Right ventricle myocardium inferior (tissue), 1 donor: ENCODE measurements at regions of chr5 and their contacts with region 1.

Region 1: GRCh38 chr5:72507909-72508575 is 832 bp upstream of the ZNF366 start:
- DNase-seq: no peak
- ATAC-seq: no peak

Region 2: DNA sequence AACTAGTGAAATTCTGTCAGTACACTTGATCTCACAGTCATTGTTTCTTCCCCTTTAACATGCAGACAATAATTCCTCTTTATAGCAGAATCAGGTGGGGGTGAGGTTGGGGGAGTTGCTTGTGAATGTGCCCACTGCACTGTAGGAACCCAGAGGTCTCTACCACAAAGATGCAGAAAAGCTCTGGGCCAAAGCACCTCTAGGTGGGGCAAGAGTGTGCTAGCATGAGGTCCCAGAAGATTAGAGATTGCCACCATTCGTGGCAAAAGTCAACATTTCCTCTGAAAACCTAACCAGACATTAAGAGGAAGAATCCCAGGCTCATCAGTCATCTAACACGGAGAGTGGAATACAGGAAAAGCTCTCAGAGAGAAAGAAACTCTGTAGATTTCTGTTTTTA is 113.4 kb before region 1 on chr5:
- intact Hi-C with region 1: loop called (anchors 10 kb)
- DNase-seq: no peak
- ATAC-seq: no peak

Region 3: GRCh38 chr5:72434781-72435437 is 73.1 kb before region 1 on chr5:
- intact Hi-C with region 1: loop called (anchors 2 kb)
- DNase-seq: no peak
- ATAC-seq: peak; percentile 80

Region 4: DNA sequence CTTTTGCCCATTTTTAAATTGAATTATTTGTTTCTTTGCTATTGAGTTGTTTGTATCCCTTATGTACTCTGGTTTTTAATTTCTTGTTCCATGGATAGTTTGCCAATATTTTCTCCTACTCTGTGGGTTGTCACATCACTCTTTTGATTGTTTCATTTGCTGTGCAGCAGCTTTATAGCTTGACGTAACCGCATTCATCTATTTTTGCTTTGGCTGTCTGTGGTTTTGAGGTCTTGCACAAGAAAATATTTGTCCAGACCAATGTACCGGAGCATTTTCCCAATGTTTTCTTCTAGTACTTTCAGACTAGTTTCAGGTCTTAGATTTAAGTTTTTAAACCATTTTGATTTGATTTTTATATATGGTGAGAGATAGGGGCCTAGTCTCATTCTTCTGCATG is 35.3 kb after region 1 on chr5:
- intact Hi-C with region 1: no loop called
- DNase-seq: no peak
- ATAC-seq: no peak

Region 5: DNA sequence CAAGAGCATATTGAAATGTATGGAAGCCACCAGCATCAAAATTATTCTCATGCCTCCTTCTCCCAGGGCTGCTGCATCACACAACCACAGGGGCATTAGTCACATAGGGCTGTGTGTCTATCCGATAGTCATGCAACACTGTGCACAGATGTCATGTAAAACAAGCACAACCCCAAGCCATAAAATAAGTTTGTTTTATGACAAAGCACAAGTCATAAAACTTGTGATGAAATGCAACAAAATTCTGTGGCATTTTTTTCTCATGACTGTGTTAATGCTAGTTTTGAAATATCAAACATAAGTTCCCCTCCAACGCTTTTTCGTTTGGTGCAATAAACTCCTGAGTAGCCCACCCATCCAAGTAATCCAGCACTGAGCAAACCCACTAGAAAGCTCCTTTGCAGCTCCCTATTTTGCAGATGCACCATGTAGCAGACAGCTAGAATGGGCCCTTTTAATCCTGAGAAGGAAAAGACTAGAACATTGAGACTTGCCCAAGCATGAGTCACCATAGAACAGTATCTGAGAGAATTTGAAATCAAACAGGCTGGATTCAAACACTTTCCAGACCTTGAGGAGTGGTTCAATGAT is 92.4 kb after region 1 on chr5:
- intact Hi-C with region 1: no loop called
- DNase-seq: no peak
- ATAC-seq: no peak